ENCODE measurements at regions of chr16 and their contacts with region 1.

Region 1: DNA sequence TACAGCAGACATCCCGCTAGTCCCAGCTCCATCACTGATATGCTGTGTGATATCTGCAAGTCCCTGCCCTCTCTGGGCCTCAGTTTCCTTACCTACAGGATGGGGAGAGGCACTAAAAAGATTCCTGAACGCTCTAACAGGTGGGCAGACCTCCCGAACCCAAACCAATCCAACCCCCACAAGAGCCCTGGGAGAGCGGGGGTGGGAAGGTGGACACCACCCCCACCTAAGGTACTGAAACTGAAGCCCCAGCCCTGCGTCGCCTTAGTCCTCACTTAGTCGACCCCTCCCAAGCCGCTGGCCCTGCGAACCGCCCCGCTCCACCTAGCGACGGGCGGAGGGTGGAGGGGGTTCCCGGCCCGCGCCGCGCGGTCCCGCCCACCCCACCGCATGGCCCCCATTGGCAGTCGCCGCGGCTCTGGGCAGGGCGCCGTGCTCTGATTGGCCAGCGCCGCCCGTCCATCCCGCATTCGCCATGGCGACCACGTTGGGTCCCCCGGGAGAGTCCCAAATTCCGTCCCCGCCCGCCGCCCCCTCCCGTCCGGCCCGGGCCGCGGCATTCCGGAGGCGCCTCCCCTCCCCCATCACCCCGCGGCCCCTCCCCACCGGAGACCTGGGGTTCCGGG is 578 bp downstream of the CCDC102A start:
- DNase-seq: peak; percentile 98
- H3K4me3 ChIP-seq: peak overlapping the region; percentile 95 to 99 (median 96)
- H3K27ac ChIP-seq: peak overlapping the region; percentile 91 to 96 (median 96)
- H3K4me1 ChIP-seq: peaks cover 26 to 64% (median 58%) of the 10 kb centered on the region in 4 donors
- H3K27me3 ChIP-seq: peaks cover 0 to under 1% (median 0%) of the 10 kb centered on the region in 4 donors
- CTCF ChIP-seq: peak in 1 of 3 experiments; percentile 20
- EP300 ChIP-seq: no peak
- POLR2A ChIP-seq: no peak

Region 2: GRCh38 chr16:57185944-57186871 is 349.6 kb before region 1 on chr16 and contains the starts of genes PSME3IP1 and RSPRY1:
- intact Hi-C with region 1: loop called (anchors 10 kb)
- DNase-seq: peak; percentile 100
- H3K4me3 ChIP-seq: peak within 1 kb of the TSS; percentile 86 to 99 (median 94)
- H3K27ac ChIP-seq: peak within 1 kb of the TSS; percentile 96 to 98 (median 97)
- H3K4me1 ChIP-seq: peaks cover 27 to 55% (median 42%) of the 10 kb centered on the region in 4 donors
- H3K27me3 ChIP-seq: no peaks in the 10 kb centered on the region
- CTCF ChIP-seq: no peak
- EP300 ChIP-seq: no peak
- POLR2A ChIP-seq: peak; percentile 34
- total RNA-seq, gene PSME3IP1: 47.8 to 60.7 (median 57.5) TPM
- total RNA-seq, gene RSPRY1: 22.4 to 30.7 (median 25.7) TPM

Region 3: DNA sequence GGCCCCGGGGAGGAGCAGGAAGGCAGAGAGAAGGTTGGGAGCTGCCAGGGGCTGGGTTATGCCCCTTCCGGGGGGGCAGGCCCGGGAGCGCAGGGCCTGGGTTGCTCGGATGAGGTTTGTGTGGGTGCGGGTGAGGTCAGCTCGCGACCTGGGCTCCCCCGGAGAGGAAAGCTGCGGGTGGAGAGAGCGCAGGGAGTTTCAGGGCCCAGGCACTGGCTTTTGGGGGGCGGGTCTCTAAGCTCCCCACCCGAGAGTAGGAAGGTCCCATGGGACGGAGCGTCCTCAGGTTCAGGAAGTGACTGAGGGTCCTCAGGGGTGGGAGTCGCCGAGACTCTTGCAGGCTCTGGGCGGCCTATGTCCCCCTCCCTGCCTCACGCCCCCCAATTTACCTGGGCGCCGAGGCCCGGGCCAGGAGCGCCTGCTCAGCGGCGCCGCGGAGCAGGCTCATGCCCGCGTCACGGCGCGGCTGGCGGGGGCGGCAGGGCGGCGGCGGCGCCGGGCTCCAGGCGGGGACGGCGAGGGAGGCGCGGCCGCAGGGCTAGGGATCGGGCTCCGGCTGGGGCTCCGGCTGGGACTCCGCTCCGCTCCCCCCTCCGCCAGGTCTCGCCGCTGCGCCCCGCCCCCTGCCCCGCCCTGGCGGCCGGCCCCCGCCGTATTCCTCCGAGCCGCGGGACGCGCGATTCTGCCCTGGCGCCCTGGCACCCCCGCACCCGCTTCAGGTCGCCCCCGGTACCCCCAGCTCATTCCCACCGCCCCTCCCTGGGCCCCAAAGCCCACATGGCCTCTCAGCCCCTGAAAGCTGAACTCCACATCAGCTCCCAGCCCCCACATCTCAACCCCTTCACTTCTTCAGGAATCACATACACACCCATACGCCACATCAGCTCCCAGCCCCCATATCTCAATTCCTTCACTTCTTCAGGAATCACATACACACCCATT is 49.6 kb before region 1 on chr16 and contains the start of gene DOK4:
- intact Hi-C with region 1: loop called (anchors 5 kb)
- DNase-seq: no peak
- H3K4me3 ChIP-seq: peak within 1 kb of the TSS; percentile 73 to 81 (median 80)
- H3K27ac ChIP-seq: peak within 1 kb of the TSS; percentile 70 to 78 (median 74)
- H3K4me1 ChIP-seq: peaks cover 18 to 36% (median 28%) of the 10 kb centered on the region in 4 donors
- H3K27me3 ChIP-seq: no peaks in the 10 kb centered on the region
- CTCF ChIP-seq: no peak
- EP300 ChIP-seq: no peak
- POLR2A ChIP-seq: no peak
- total RNA-seq, gene DOK4: 14.5 to 36.7 (median 29.4) TPM

Region 4: DNA sequence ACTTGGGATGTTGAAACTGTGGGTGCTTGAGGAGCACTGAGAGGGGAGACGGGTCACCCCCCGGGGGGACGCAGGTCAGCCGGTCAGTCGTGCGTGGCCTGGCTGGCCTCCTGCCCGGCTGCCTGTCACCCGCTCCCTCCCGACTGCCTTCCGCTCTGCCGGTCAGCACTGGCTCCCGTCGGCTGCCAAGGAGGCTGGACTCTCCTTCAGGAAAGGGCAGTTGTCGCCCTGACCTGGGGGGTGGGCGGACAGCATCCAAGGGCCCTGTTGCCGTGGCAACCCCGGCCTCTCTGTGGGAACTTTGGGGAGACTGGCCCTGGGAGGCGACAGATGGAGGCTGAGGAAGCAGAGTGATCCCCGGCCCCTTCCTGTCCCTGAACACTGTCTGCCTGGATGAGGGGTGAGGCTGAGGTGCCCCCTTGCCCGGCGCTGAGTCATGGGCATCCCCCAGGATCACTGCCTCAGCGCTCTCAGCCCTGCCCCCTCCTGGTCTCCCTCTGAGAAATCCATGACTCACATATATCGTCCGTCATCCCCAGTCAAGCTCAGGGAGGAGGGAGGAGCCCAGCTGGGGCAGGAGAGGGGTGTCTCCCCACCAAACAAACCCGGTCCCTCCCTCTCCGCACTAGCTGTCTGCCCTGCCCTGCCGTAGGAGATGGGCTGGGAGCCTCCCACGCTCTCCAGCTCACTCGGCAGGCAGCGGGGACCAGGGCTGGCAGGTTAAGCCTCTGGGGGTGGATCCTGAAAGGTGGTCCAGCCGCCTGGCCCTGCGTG is 92.4 kb after region 1 on chr16 and contains the start of gene ADGRG1:
- intact Hi-C with region 1: no loop called
- DNase-seq: no peak
- H3K4me3 ChIP-seq: peak within 1 kb of the TSS; percentile 39 to 59 (median 44)
- H3K27ac ChIP-seq: peak within 1 kb of the TSS; percentile 53 to 69 (median 64)
- H3K4me1 ChIP-seq: peaks cover 30 to 42% (median 36%) of the 10 kb centered on the region in 4 donors
- H3K27me3 ChIP-seq: peaks cover 0 to 35% (median 0%) of the 10 kb centered on the region in 4 donors
- CTCF ChIP-seq: peak in 1 of 3 experiments; percentile 3
- EP300 ChIP-seq: no peak
- POLR2A ChIP-seq: peak; percentile 33
- total RNA-seq, gene ADGRG1: 17.4 to 21.4 (median 19.1) TPM

Measured in esophagus muscularis mucosa (tissue), 4 donors.